Activated CD4-positive, alpha-beta T cell treated with anti-CD3 and anti-CD28 coated beads for 36 hours (primary cell): ENCODE measurements at regions of chr3 and their contacts with region 1.

Region 1: GRCh38 chr3:177426878-177427495 is 229.7 kb upstream of the TBL1XR1 start:
- DNase-seq: peak; percentile 77
- ATAC-seq: peak; percentile 97
- H3K4me3 Mint-ChIP-seq: peak overlapping the region; percentile 47
- H3K27ac Mint-ChIP-seq: peak overlapping the region; percentile 92
- H3K4me1 Mint-ChIP-seq: peaks cover 32% of the 10 kb centered on the region
- H3K27me3 Mint-ChIP-seq: peaks cover 3% of the 10 kb centered on the region

Region 2: DNA sequence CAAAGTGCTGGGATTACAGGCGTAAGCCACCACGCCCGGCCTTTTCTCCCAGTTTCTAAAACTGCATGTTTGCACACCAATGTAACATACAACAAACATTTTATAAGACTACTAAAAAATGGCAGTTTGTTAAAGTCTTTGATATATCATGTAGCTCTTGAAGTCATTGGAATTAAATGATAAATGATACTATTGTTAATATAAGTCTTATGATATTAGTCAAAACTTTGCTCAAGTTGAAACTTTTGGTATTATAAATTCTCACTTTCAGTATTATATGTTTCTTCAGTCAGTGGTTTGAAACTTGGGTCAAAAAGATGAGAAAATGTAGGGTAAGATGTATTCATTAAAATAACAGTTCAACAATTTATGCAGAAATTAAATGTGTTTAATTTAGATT is 112.1 kb before region 1 on chr3:
- CTCF ChIA-PET with region 1: no interaction called
- POLR2A ChIA-PET with region 1: no interaction called
- intact Hi-C with region 1: loop called (anchors 1 to 2 kb)
- DNase-seq: no peak
- ATAC-seq: peak; percentile 72
- H3K4me3 Mint-ChIP-seq: no peak overlapping the region
- H3K27ac Mint-ChIP-seq: no peak overlapping the region
- H3K4me1 Mint-ChIP-seq: peaks cover 23% of the 10 kb centered on the region
- H3K27me3 Mint-ChIP-seq: peaks cover 3% of the 10 kb centered on the region

Region 3: GRCh38 chr3:177337541-177338331 is 89.3 kb before region 1 on chr3:
- CTCF ChIA-PET with region 1: no interaction called
- POLR2A ChIA-PET with region 1: interaction called, 3 read pairs
- intact Hi-C with region 1: loop called in 1 of 2 experiments (anchors 1 kb)
- DNase-seq: peak; percentile 89
- ATAC-seq: peak; percentile 89
- H3K4me3 Mint-ChIP-seq: peak overlapping the region; percentile 23
- H3K27ac Mint-ChIP-seq: peak overlapping the region; percentile 78
- H3K4me1 Mint-ChIP-seq: peaks cover 41% of the 10 kb centered on the region
- H3K27me3 Mint-ChIP-seq: peaks cover 6% of the 10 kb centered on the region

Region 4: DNA sequence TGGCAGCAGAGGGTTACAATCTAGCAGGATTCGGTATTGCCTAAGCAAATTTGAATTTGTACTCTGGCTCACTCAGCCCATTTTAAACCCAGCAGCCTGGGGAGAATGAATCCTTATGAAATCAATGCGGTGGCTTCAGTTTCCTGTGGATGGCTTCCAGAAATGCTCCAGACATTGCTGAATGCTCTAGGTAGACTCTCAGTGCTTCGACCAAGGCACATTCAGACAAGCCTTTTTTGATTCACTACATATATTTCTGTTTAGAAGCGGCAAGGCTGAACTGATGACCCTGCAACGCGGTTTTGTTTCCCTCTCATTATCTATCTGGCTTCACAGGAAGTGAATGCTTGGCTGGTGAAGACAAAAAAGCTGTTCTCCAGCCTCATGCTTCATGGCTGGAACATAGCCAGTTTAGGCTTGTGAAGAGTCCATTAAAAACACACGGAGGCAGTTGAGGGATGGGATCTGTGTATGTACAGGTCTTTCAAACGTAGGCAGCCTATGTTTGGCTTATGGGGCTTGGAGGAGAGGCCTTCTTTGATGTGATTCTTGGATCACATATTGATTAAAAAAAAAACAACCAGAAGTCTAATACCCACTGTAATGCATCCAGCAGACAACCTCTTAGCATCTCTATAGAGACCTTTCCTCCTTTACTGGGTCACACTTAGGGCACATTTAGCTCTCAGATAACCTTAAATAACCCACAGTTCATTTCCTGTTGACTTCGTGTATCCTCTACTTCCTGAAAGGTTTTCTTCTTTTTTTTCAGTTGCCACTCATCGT is 170.5 kb after region 1 on chr3:
- CTCF ChIA-PET with region 1: no interaction called
- POLR2A ChIA-PET with region 1: no interaction called
- intact Hi-C with region 1: loop called (anchors 5 kb)
- DNase-seq: peak; percentile 51
- ATAC-seq: peak; percentile 68
- H3K4me3 Mint-ChIP-seq: peak overlapping the region; percentile 45
- H3K27ac Mint-ChIP-seq: peak overlapping the region; percentile 88
- H3K4me1 Mint-ChIP-seq: peaks cover 70% of the 10 kb centered on the region
- H3K27me3 Mint-ChIP-seq: no peaks in the 10 kb centered on the region

Region 5: GRCh38 chr3:178001670-178002101 is 574.7 kb after region 1 on chr3:
- CTCF ChIA-PET with region 1: no interaction called
- POLR2A ChIA-PET with region 1: no interaction called
- intact Hi-C with region 1: loop called in 1 of 2 experiments (anchors 5 kb)
- DNase-seq: peak; percentile 58
- ATAC-seq: peak; percentile 93
- H3K4me3 Mint-ChIP-seq: no peak overlapping the region
- H3K27ac Mint-ChIP-seq: peak overlapping the region; percentile 80
- H3K4me1 Mint-ChIP-seq: peaks cover 60% of the 10 kb centered on the region
- H3K27me3 Mint-ChIP-seq: no peaks in the 10 kb centered on the region